ENCODE measurements at regions of chr1 and their contacts with region 1.

Region 1: GRCh38 chr1:200971955-200972711 is 51.4 kb downstream of the KIF21B start:
- DNase-seq: peak; percentile 80
- H3K4me3 Mint-ChIP-seq: no peak overlapping the region
- H3K27ac Mint-ChIP-seq: no peak overlapping the region
- H3K4me1 Mint-ChIP-seq: peaks cover 14% of the 10 kb centered on the region
- H3K27me3 Mint-ChIP-seq: no peaks in the 10 kb centered on the region
- CTCF ChIP-seq: peak; percentile 100

Region 2: DNA sequence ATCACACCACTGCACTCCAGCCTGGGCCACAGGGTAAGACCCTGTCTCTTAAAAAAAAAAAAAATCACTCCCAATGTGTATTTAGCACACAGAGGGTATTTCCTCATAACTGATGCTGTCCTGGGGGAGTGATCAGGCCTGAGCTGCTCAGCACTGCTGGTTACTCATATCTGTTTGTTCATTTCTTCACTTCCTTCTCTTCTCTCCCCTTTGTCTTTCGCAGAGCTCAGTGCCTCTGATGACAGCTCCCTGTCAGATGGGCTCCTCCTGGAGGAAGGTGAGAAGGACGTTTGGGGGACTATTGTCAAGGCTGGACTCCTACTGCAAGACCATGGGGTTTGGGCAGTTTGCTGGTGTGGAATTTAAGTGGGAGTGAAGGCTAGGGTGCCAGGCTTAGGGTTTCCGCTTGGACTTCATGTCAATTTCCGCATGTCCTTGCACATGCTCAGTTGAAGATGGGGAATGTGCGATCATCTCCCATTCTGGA is 64.5 kb before region 1 on chr1:
- CTCF ChIA-PET with region 1: interaction called, 14 read pairs
- POLR2A ChIA-PET with region 1: interaction called, 3 read pairs
- intact Hi-C with region 1: no loop called
- DNase-seq: peak; percentile 61
- H3K4me3 Mint-ChIP-seq: no peak overlapping the region
- H3K27ac Mint-ChIP-seq: no peak overlapping the region
- H3K4me1 Mint-ChIP-seq: peaks cover 32% of the 10 kb centered on the region
- H3K27me3 Mint-ChIP-seq: no peaks in the 10 kb centered on the region
- CTCF ChIP-seq: no peak

Region 3: DNA sequence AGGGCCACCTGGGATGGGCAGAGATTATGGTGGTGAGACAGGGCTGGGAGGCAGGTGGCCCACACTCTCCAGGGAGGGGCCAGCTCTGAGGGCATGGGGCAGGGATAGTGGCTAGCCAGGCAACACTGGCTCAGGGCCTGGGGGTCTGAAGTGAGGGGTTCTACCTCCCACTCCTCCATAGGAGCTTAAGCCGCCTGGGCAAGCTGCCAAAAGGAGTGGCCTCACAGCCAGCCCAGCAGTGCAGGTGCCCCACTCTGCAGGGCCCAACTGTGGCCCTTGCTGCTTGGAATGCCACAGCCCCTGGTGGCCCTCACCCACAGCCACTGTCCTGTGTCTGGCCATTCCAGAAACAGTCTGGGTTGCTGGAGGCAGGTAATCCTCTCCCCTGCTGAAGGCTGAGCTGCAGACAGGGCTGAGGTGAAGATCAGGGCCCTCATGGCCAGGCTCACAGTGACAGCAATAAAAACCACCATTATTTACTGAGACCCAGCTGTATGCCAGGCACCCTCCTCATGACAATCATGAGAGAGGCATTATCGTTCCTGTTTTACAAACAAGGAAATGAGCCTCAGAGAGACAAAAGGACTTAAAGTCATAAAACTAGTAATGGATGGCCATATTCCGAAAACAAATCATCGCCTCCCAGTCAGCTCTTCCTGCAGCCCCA is 20.4 kb after region 1 on chr1:
- CTCF ChIA-PET with region 1: interaction called, 117 read pairs
- POLR2A ChIA-PET with region 1: no interaction called
- intact Hi-C with region 1: no loop called
- DNase-seq: no peak
- H3K4me3 Mint-ChIP-seq: no peak overlapping the region
- H3K27ac Mint-ChIP-seq: no peak overlapping the region
- H3K4me1 Mint-ChIP-seq: no peaks in the 10 kb centered on the region
- H3K27me3 Mint-ChIP-seq: no peaks in the 10 kb centered on the region
- CTCF ChIP-seq: no peak

Region 4: GRCh38 chr1:201036188-201036842 is 64.2 kb after region 1 on chr1:
- CTCF ChIA-PET with region 1: interaction called, 96 read pairs
- POLR2A ChIA-PET with region 1: interaction called, 3 read pairs
- intact Hi-C with region 1: no loop called
- DNase-seq: no peak
- H3K4me3 Mint-ChIP-seq: no peak overlapping the region
- H3K27ac Mint-ChIP-seq: no peak overlapping the region
- H3K4me1 Mint-ChIP-seq: no peaks in the 10 kb centered on the region
- H3K27me3 Mint-ChIP-seq: no peaks in the 10 kb centered on the region
- CTCF ChIP-seq: no peak

Region 5: DNA sequence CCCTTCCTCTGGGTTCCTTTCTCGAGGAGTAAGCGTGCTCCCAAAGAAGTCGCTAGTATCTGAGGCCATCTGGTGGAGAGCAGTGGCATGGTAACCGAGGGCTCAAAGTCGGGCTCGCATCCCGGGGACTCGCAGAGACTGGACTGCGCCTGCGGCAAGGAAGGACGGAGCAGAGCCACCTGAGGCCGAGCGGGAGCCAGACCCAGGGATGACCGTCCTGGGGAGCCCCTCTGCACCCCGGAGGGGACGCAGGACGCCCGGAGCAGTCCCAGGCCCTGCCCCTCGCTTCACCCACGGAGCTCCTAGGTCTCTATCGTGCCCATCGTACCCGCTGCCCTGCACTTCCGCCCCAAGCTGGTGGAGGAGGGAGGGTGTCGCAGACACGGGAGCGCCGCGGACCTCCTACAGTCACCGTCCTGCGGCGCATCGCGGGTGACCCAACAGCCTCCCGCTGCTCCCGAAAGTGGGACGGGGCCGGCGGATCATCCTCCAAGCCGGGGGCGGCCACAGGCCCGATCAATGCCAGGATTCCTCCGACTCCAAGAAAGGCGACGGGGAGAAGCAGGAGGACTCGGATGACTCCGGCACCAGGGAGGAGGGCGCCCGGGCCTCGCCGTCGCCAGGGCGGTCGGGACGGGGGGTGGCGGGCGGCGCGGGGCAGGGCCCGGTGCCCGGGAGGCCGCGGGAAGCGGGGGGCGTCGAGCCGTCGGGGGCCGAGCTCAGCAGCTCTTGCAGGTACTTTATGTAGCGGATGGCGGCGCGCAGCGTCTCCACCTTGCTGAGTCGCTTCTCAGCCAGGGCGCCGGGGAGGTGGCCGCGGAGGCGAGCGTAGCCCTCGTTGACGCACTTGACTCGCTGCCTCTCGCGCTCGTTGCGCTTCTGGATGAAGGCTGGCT is 142.4 kb after region 1 on chr1:
- CTCF ChIA-PET with region 1: interaction called, 92 read pairs
- POLR2A ChIA-PET with region 1: no interaction called
- intact Hi-C with region 1: loop called (anchors 1 kb)
- DNase-seq: peak; percentile 98
- H3K4me3 Mint-ChIP-seq: peak overlapping the region; percentile 78
- H3K27ac Mint-ChIP-seq: peak overlapping the region; percentile 55
- H3K4me1 Mint-ChIP-seq: no peaks in the 10 kb centered on the region
- H3K27me3 Mint-ChIP-seq: no peaks in the 10 kb centered on the region
- CTCF ChIP-seq: peak; percentile 98

Region 6: GRCh38 chr1:201361652-201362504 is 389.7 kb after region 1 on chr1:
- CTCF ChIA-PET with region 1: interaction called, 20 read pairs
- POLR2A ChIA-PET with region 1: no interaction called
- intact Hi-C with region 1: no loop called
- DNase-seq: peak; percentile 82
- H3K4me3 Mint-ChIP-seq: no peak overlapping the region
- H3K27ac Mint-ChIP-seq: no peak overlapping the region
- H3K4me1 Mint-ChIP-seq: peaks cover 24% of the 10 kb centered on the region
- H3K27me3 Mint-ChIP-seq: peaks cover 8% of the 10 kb centered on the region
- CTCF ChIP-seq: peak; percentile 100

Region 7: GRCh38 chr1:202101184-202102005 is 1129.3 kb after region 1 on chr1:
- CTCF ChIA-PET with region 1: no interaction called
- POLR2A ChIA-PET with region 1: no interaction called
- intact Hi-C with region 1: no loop called
- DNase-seq: no peak
- H3K4me3 Mint-ChIP-seq: no peak overlapping the region
- H3K27ac Mint-ChIP-seq: no peak overlapping the region
- H3K4me1 Mint-ChIP-seq: peaks cover 13% of the 10 kb centered on the region
- H3K27me3 Mint-ChIP-seq: no peaks in the 10 kb centered on the region
- CTCF ChIP-seq: no peak